Posterior cingulate gyrus (tissue), 11 donors: ENCODE measurements at regions of chr19 and their contacts with region 1.

Region 1: DNA sequence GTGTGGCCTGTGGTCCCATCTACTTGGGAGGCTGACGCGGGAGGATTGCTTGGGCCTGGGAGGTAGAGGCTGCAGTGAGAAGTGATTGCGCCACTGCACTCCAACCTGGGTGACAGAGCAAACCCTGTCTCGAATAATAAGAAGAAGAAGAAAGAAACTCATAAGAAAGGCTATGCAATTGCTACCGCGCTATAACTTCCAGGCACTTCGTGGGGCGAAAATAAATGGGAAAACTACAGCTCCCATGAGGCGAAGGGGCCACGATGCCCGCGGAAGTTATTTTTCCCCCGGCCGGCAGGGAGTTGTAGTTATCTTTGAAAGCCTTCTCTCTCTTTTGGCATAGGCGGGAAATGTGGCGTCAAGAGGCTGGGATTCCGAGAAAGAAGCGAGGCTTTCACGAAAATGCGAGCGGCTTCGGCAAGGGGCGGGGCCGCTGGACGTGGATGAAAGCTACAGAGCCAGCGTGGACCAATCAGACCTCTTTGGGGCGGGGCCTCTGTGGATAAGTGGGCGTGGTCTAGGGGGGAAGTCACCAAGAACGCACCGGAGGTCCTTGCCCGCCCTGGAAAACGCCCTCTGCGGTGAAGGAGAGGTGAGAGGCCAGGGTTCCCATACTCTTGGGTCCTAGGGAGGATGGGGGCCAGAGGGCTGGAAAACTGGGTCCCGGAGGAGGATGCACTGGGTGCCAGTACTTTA is at the start of gene NUCB1:
- DNase-seq: peak; percentile 96 to 100 (median 99)

Region 2: GRCh38 chr19:48780631-48781391 is 119.1 kb before region 1 on chr19:
- intact Hi-C with region 1: no loop called
- DNase-seq: no peak

Region 3: DNA sequence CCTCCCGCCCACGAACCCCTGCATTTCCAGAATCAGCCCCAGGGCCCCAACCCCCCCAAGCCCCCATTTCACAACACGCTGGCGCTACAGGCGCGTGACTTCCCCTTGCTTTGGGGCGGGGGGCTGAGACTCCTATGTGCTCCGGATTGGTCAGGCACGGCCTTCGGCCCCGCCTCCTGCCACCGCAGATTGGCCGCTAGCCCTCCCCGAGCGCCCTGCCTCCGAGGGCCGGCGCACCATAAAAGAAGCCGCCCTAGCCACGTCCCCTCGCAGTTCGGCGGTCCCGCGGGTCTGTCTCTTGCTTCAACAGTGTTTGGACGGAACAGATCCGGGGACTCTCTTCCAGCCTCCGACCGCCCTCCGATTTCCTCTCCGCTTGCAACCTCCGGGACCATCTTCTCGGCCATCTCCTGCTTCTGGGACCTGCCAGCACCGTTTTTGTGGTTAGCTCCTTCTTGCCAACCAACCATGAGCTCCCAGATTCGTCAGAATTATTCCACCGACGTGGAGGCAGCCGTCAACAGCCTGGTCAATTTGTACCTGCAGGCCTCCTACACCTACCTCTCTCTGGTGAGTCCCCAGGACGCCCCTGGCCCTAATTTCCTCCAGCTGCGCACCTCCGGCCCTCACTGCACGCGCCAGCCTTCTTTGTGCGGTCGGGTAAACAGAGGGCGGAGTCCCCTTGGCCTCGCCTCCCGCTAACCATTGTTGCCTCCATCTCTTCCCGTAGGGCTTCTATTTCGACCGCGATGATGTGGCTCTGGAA is 65.3 kb after region 1 on chr19 and contains the start of gene FTL:
- intact Hi-C with region 1: loop called (anchors 10 kb)
- DNase-seq: peak; percentile 98 to 100 (median 99)